ENCODE measurements at regions of chr13 and their contacts with region 1.

Region 1: GRCh38 chr13:77697217-77698103 is at the start of gene SLAIN1:
- DNase-seq: peak; percentile 72 to 93
- ATAC-seq: peak; percentile 79 to 88 (median 81)
- H3K4me3 ChIP-seq: peak within 1 kb of the TSS; percentile 97
- H3K4me3 Mint-ChIP-seq: peak within 1 kb of the TSS; percentile 99
- H3K27ac ChIP-seq: peak within 1 kb of the TSS; percentile 75
- H3K27ac Mint-ChIP-seq: peak within 1 kb of the TSS; percentile 87 to 92
- H3K4me1 ChIP-seq: peaks cover 4% of the 10 kb centered on the region
- H3K4me1 Mint-ChIP-seq: peaks cover 26 to 29% of the 10 kb centered on the region in 2 donors
- H3K27me3 ChIP-seq: no peaks in the 10 kb centered on the region
- H3K27me3 Mint-ChIP-seq: peaks cover 4 to 7% of the 10 kb centered on the region in 2 donors
- CTCF ChIP-seq: no peak
- total RNA-seq, gene SLAIN1: 14.9 to 29.0 (median 25.7) TPM

Region 2: DNA sequence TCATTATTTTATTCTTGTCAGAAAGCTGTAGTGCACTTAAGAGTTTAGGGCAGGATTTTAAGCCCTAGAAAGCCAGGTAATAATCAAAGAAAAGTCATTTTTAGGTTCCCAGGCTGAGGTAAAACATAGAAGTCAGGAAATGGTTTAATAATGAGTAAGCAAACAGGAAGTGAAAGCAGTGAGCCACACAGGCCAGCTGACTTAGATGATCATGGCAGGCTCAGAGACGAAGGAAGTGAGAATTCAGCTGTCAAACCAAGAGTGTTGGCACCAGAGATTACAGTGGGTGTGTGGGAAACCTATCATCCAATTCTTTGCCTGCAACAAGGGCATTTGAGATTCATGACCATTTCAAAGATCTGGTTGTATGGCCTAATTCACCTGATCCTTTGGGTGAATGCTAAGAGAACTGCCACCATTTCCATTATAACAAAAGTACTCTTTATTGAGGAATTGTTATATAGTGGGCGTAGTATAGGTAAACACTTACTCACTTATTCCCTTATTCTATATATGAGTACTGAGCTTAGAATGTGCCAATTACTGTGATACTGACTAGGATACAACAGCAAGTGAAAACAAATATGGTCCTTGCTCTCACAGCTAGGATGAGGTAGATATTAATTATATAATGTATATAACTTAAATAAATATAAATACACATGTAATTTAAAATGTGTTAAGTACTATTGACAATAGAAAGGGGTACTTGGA is 324.9 kb after region 1 on chr13:
- intact Hi-C with region 1: loop called (anchors 10 kb)
- DNase-seq: peak; percentile 39 to 65
- ATAC-seq: peak; percentile 93 to 100 (median 98)
- H3K4me3 ChIP-seq: no peak overlapping the region
- H3K4me3 Mint-ChIP-seq: peak overlapping the region; percentile 64
- H3K27ac ChIP-seq: peak overlapping the region; percentile 78
- H3K27ac Mint-ChIP-seq: peak overlapping the region; percentile 67 to 87
- H3K4me1 ChIP-seq: no peaks in the 10 kb centered on the region
- H3K4me1 Mint-ChIP-seq: peaks cover 21 to 23% of the 10 kb centered on the region in 2 donors
- H3K27me3 ChIP-seq: no peaks in the 10 kb centered on the region
- H3K27me3 Mint-ChIP-seq: no peaks in the 10 kb centered on the region
- CTCF ChIP-seq: no peak

Region 3: DNA sequence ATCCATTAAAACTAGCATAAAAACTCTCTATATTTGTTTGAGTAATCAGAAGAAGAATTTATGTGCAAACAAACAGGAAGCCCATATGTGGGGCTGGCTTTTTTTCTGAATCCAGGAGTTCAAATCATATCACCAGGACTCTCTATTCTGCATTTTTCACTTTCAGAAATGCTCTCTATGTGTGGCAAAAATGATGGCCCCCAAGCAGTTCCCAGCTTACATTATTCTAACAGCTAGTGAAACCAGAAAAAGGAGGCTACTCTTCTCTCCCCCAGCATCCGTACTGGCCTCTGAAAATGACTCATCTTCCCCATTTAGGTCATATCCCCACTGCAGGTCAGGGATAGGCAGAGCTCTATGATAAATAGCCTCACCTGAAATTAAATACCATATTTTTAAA is 1688.2 kb after region 1 on chr13:
- intact Hi-C with region 1: loop called (anchors 10 kb)
- DNase-seq: peak in 1 of 2 donors; percentile 42
- ATAC-seq: peak; percentile 59 to 81 (median 65)
- H3K4me3 ChIP-seq: no peak overlapping the region
- H3K4me3 Mint-ChIP-seq: peak overlapping the region; percentile 10
- H3K27ac ChIP-seq: no peak overlapping the region
- H3K27ac Mint-ChIP-seq: peak overlapping the region in 1 of 2 donors; percentile 72
- H3K4me1 ChIP-seq: peaks cover 3% of the 10 kb centered on the region
- H3K4me1 Mint-ChIP-seq: peaks cover 51% of the 10 kb centered on the region in 2 donors
- H3K27me3 ChIP-seq: no peaks in the 10 kb centered on the region
- H3K27me3 Mint-ChIP-seq: no peaks in the 10 kb centered on the region
- CTCF ChIP-seq: no peak